ENCODE measurements at regions of chr1 and their contacts with region 1.

Region 1: GRCh38 chr1:47997289-47998200 is at the start of gene TRABD2B:
- DNase-seq: peak; percentile 62 to 87 (median 79)
- H3K4me3 ChIP-seq: peak within 1 kb of the TSS; percentile 53
- H3K27ac ChIP-seq: peak within 1 kb of the TSS in 1 of 2 donors; percentile 20
- H3K4me1 ChIP-seq: no peaks in the 10 kb centered on the region
- H3K27me3 ChIP-seq: no peaks in the 10 kb centered on the region
- CTCF ChIP-seq: peak; percentile 76 to 87 (median 86)
- EP300 ChIP-seq: no peak
- POLR2A ChIP-seq: no peak
- total RNA-seq, gene TRABD2B: 0.18 to 1.6 (median 0.24) TPM

Region 2: GRCh38 chr1:47785561-47786271 is 211.8 kb before region 1 on chr1:
- intact Hi-C with region 1: loop called in 1 of 4 experiments (anchors 10 kb)
- DNase-seq: no peak
- H3K4me3 ChIP-seq: no peak overlapping the region
- H3K27ac ChIP-seq: no peak overlapping the region
- H3K4me1 ChIP-seq: no peaks in the 10 kb centered on the region
- H3K27me3 ChIP-seq: no peaks in the 10 kb centered on the region
- CTCF ChIP-seq: no peak
- EP300 ChIP-seq: no peak
- POLR2A ChIP-seq: no peak

Region 3: GRCh38 chr1:47934243-47934805 is 63.2 kb before region 1 on chr1:
- intact Hi-C with region 1: loop called in 1 of 4 experiments (anchors 10 kb)
- DNase-seq: peak in 3 of 5 donors; percentile 11 to 71 (median 54)
- H3K4me3 ChIP-seq: no peak overlapping the region
- H3K27ac ChIP-seq: no peak overlapping the region
- H3K4me1 ChIP-seq: no peaks in the 10 kb centered on the region
- H3K27me3 ChIP-seq: no peaks in the 10 kb centered on the region
- CTCF ChIP-seq: no peak
- EP300 ChIP-seq: no peak
- POLR2A ChIP-seq: no peak

Region 4: GRCh38 chr1:48498096-48498791 is 500.7 kb after region 1 on chr1:
- intact Hi-C with region 1: loop called in 1 of 4 experiments (anchors 5 kb)
- DNase-seq: peak; percentile 69 to 88 (median 82)
- H3K4me3 ChIP-seq: no peak overlapping the region
- H3K27ac ChIP-seq: no peak overlapping the region
- H3K4me1 ChIP-seq: peaks cover 7% of the 10 kb centered on the region
- H3K27me3 ChIP-seq: no peaks in the 10 kb centered on the region
- CTCF ChIP-seq: peak; percentile 59 to 72 (median 71)
- EP300 ChIP-seq: no peak
- POLR2A ChIP-seq: no peak

Measured in ovary (tissue), 10 donors.